ENCODE measurements at regions of chr1 and their contacts with region 1.

Region 1: GRCh38 chr1:41573785-41574713 is 89.6 kb upstream of the EDN2 start:
- DNase-seq: peak; percentile 88
- ATAC-seq: peak; percentile 92
- H3K4me3 ChIP-seq: no peak overlapping the region
- H3K4me3 Mint-ChIP-seq: no peak overlapping the region
- H3K27ac ChIP-seq: no peak overlapping the region
- H3K27ac Mint-ChIP-seq: no peak overlapping the region
- H3K4me1 ChIP-seq: peaks cover 14 to 18% of the 10 kb centered on the region in 2 donors
- H3K4me1 Mint-ChIP-seq: peaks cover 22% of the 10 kb centered on the region
- H3K27me3 ChIP-seq: no peaks in the 10 kb centered on the region
- H3K27me3 Mint-ChIP-seq: no peaks in the 10 kb centered on the region
- CTCF ChIP-seq: peak; percentile 92

Region 2: DNA sequence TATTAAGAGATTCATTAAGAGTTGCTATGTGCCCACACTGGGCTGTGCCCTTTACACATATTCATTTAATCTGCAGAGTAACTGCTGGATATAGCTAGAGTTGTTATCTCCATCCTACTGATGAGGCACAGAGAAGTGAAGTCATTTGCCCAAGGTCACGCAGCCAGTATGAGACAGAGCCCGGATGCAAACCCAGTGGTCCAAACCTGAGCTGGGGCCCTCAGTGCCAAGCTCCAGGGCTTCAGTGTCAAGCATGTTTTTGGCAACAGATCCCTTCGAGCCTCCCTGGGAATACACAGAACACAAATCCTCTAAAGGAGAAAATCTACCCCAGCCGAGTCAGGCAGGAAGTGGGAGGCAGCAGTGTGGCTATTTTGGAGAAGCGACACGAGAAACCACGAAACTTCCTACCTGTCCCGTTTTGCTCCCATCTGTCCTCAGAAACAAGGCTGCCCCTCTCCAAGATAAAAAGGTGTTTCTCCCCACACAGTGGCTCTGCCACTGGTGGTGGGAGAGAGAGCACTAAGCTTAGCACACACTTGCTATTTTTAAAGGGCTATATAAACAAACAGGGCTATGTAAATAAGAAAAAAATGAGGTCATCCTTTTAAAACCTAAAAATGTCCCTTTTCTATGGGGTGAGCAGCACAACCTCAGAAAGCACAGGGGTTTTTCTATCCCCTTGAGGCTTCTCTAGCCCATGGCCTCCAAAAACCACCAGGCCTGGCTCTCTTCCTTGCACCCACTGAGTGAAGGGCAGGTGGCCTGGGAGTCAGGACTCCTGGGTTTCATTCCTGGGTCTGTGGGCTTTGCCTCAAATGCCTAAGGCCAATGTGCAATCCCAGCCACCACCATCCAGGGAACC is 49.0 kb after region 1 on chr1:
- CTCF ChIA-PET with region 1: interaction called, 4 read pairs
- POLR2A ChIA-PET with region 1: interaction called, 4 read pairs
- intact Hi-C with region 1: loop called (anchors 2 kb)
- DNase-seq: peak; percentile 74
- ATAC-seq: peak; percentile 94
- H3K4me3 ChIP-seq: peak overlapping the region in 4 of 5 experiments; percentile 16 to 56 (median 34)
- H3K4me3 Mint-ChIP-seq: peak overlapping the region; percentile 84
- H3K27ac ChIP-seq: peak overlapping the region; percentile 62 to 77
- H3K27ac Mint-ChIP-seq: peak overlapping the region; percentile 89
- H3K4me1 ChIP-seq: peaks cover 27 to 42% of the 10 kb centered on the region in 2 donors
- H3K4me1 Mint-ChIP-seq: peaks cover 65% of the 10 kb centered on the region
- H3K27me3 ChIP-seq: no peaks in the 10 kb centered on the region
- H3K27me3 Mint-ChIP-seq: no peaks in the 10 kb centered on the region
- CTCF ChIP-seq: no peak

Region 3: DNA sequence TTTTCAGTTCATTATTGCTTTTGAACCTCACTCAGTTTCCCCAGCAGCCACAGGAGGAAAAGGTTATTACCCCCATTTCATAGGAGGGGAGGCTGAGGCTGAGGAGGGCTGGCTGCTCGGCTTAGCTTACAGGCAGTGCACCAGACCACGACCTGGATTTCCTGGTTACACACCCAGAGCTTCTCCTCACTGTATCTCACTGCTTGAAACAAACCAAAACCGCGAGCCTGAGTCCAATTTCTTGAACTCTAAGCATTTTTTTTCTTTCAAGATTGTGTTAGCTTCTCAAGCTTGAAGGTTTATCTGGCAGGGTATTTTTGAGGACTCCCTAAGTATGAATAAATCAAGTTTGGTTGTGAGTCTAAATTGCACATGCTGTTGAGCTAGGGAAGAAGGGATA is 99.3 kb after region 1 on chr1:
- CTCF ChIA-PET with region 1: interaction called, 15 read pairs
- POLR2A ChIA-PET with region 1: no interaction called
- intact Hi-C with region 1: no loop called
- DNase-seq: peak; percentile 73
- ATAC-seq: peak; percentile 85
- H3K4me3 ChIP-seq: peak overlapping the region in 3 of 5 experiments; percentile 36 to 53 (median 39)
- H3K4me3 Mint-ChIP-seq: peak overlapping the region; percentile 86
- H3K27ac ChIP-seq: peak overlapping the region; percentile 75 to 81
- H3K27ac Mint-ChIP-seq: peak overlapping the region; percentile 86
- H3K4me1 ChIP-seq: peaks cover 42 to 70% of the 10 kb centered on the region in 2 donors
- H3K4me1 Mint-ChIP-seq: peaks cover 82% of the 10 kb centered on the region
- H3K27me3 ChIP-seq: no peaks in the 10 kb centered on the region
- H3K27me3 Mint-ChIP-seq: no peaks in the 10 kb centered on the region
- CTCF ChIP-seq: no peak

Region 4: DNA sequence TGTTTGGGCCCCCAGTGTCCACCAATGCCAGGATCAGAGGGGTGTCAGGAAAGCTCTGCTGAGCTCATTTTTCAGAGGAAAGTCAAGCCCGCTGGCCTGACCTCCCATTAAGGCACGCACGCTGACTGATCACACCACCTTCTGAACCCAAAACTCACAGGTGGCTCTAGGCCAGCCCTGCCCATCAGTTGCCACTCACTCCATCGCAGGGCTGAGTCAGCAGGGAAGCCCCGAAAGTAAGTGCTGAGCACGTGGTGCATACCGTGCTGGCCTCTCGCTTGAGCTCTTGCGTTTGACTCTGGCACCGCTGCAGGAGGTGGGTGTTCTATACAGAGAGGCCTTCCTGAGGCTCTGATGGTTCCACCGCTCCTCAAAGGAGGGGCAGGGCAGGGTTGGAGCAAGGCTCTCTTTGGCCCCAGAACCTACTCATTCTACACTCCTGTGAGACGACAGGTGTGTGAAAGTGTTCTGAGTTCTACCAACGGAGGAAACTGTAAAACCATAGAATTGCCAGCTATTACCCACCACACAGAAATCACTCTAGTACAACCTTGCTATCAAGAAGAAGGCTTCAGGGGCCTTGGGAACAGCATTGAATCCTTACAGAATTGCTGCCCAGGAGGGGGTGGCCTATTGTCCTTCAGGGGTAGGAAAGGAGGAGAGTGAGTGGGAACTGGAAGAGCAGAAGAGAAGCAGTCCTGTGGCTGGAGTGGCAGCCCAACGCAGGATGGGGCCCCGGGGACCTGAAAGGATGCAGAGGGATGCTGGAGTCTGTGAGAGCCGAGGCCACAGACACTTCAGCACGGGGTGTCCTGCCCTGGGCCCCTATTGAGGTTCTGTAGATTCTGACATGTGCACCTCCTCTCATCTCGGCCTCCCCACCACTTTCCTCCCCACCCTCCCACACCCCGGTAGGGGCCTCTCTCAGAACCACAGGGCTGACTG is 125.1 kb after region 1 on chr1:
- CTCF ChIA-PET with region 1: no interaction called
- POLR2A ChIA-PET with region 1: no interaction called
- intact Hi-C with region 1: no loop called
- DNase-seq: peak; percentile 48
- ATAC-seq: peak; percentile 94
- H3K4me3 ChIP-seq: no peak overlapping the region
- H3K4me3 Mint-ChIP-seq: no peak overlapping the region
- H3K27ac ChIP-seq: no peak overlapping the region
- H3K27ac Mint-ChIP-seq: peak overlapping the region; percentile 47
- H3K4me1 ChIP-seq: peaks cover 6 to 12% of the 10 kb centered on the region in 2 donors
- H3K4me1 Mint-ChIP-seq: peaks cover 18% of the 10 kb centered on the region
- H3K27me3 ChIP-seq: no peaks in the 10 kb centered on the region
- H3K27me3 Mint-ChIP-seq: no peaks in the 10 kb centered on the region
- CTCF ChIP-seq: no peak

Region 5: GRCh38 chr1:41802532-41803501 is 228.8 kb after region 1 on chr1:
- CTCF ChIA-PET with region 1: interaction called, 15 read pairs
- POLR2A ChIA-PET with region 1: no interaction called
- intact Hi-C with region 1: loop called (anchors 5 kb)
- DNase-seq: peak; percentile 63
- ATAC-seq: peak; percentile 79
- H3K4me3 ChIP-seq: peak overlapping the region in 1 of 5 experiments; percentile 16
- H3K4me3 Mint-ChIP-seq: peak overlapping the region; percentile 71
- H3K27ac ChIP-seq: peak overlapping the region; percentile 56 to 70
- H3K27ac Mint-ChIP-seq: peak overlapping the region; percentile 84
- H3K4me1 ChIP-seq: peaks cover 69 to 82% of the 10 kb centered on the region in 2 donors
- H3K4me1 Mint-ChIP-seq: peaks cover 74% of the 10 kb centered on the region
- H3K27me3 ChIP-seq: no peaks in the 10 kb centered on the region
- H3K27me3 Mint-ChIP-seq: no peaks in the 10 kb centered on the region
- CTCF ChIP-seq: no peak

Region 6: GRCh38 chr1:41868599-41868998 is 294.6 kb after region 1 on chr1:
- CTCF ChIA-PET with region 1: interaction called, 75 read pairs
- POLR2A ChIA-PET with region 1: no interaction called
- intact Hi-C with region 1: loop called (anchors 1 kb)
- DNase-seq: peak; percentile 71
- ATAC-seq: peak; percentile 80
- H3K4me3 ChIP-seq: peak overlapping the region in 1 of 5 experiments; percentile 32
- H3K4me3 Mint-ChIP-seq: peak overlapping the region; percentile 29
- H3K27ac ChIP-seq: no peak overlapping the region
- H3K27ac Mint-ChIP-seq: no peak overlapping the region
- H3K4me1 ChIP-seq: peaks cover 7 to 10% of the 10 kb centered on the region in 2 donors
- H3K4me1 Mint-ChIP-seq: peaks cover 17% of the 10 kb centered on the region
- H3K27me3 ChIP-seq: no peaks in the 10 kb centered on the region
- H3K27me3 Mint-ChIP-seq: no peaks in the 10 kb centered on the region
- CTCF ChIP-seq: peak; percentile 42

Region 7: DNA sequence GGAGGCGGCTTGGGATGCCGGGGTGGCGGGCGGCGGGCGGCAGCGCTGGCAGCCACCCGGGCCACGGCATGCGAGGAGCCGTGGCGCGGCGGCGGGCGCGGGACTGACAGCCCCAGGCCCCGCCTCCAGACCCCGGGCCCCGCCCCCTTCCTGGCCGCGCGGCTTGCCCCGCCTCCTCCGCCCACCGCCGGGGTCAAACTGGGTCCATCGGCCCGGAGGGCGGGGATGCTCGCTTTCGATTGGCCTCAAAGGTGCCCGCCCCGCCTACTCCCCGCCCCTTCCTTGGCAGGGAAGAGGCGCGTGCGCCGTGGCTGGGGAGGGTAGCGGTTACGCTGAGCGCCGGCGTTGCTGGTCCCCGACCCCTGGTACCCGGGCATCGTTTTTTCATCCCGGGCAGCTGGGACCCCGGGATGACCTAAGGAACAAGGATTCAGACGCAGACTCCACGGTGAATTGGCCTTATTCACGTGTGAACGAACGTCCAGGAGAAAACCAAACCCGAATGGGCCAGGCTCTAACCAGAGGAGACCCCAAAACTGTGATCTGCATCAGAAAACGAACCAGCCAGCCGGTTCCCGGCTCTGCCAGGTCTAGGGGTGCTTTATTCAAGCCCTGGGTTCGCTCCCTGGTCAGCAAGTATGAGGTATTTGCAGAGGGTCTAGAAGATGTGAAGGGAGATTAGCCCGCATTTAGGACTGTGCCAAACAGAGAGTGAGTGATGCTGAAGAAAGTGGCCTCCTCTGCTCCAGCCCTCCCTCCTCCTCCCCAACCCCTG is 462.0 kb after region 1 on chr1:
- CTCF ChIA-PET with region 1: interaction called, 5 read pairs
- POLR2A ChIA-PET with region 1: no interaction called
- intact Hi-C with region 1: loop called (anchors 10 kb)
- DNase-seq: peak; percentile 95
- ATAC-seq: peak; percentile 94
- H3K4me3 ChIP-seq: peak overlapping the region; percentile 13 to 93 (median 83)
- H3K4me3 Mint-ChIP-seq: peak overlapping the region; percentile 72
- H3K27ac ChIP-seq: peak overlapping the region in 1 of 2 donors; percentile 34
- H3K27ac Mint-ChIP-seq: peak overlapping the region; percentile 67
- H3K4me1 ChIP-seq: peaks cover 13 to 15% of the 10 kb centered on the region in 2 donors
- H3K4me1 Mint-ChIP-seq: peaks cover 12% of the 10 kb centered on the region
- H3K27me3 ChIP-seq: peaks cover 0 to 6% (median 0%) of the 10 kb centered on the region in 4 experiments
- H3K27me3 Mint-ChIP-seq: peaks cover 13% of the 10 kb centered on the region
- CTCF ChIP-seq: no peak

Measured in B cell (primary cell).